Dorsolateral prefrontal cortex (tissue), 120 donors: ENCODE measurements at regions of chr11 and their contacts with region 1.

Region 1: DNA sequence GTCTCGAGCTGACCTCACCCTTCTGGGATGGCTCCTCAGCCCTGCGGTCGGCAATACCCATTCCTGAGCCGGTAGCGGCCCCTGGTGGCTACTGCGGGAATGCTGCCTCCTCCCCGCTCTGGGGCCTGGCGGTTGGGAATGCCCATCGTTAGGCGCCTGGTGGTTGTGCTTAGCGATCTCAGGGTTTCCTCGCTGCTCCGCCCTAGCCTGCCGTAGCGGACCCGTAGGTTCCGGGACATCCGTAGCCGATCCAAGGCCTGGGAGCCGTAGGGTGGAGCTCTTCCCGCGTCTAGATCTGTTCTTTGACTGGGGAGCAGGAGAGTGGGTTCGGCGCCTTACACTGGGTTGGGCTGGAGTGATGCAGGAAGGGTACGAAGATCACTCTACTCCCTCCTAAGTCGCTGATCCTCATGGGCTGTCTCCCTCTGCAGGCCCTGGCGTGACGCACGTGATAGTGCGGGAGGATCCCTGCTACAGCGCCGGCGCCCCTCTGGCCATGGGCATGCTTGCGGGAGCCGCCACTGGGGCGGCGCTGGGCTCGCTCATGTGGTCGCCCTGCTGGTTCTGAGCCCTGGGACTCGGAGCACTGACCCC is 14.8 kb downstream of the PLEKHB1 start:
- DNase-seq: peak; percentile 87 to 95 (median 92)
- H3K4me3 ChIP-seq: peak overlapping the region; percentile 11 to 68 (median 48)
- H3K27ac ChIP-seq: peak overlapping the region in 58 of 59 donors; percentile 53 to 95 (median 84)
- H3K27me3 ChIP-seq: no peaks in the 10 kb centered on the region
- CTCF ChIP-seq: peak; percentile 80 to 100 (median 98)

Region 2: GRCh38 chr11:73404048-73404447 is 257.1 kb before region 1 on chr11:
- intact Hi-C with region 1: loop called (anchors 2 to 5 kb)
- DNase-seq: peak in 8 of 10 donors; percentile 55 to 79 (median 72)
- H3K4me3 ChIP-seq: no peak overlapping the region
- H3K27ac ChIP-seq: peak overlapping the region in 29 of 59 donors; percentile 3 to 68 (median 37)
- H3K27me3 ChIP-seq: no peaks in the 10 kb centered on the region
- CTCF ChIP-seq: peak; percentile 32 to 88 (median 74)

Region 3: GRCh38 chr11:73478738-73479347 is 182.3 kb before region 1 on chr11:
- intact Hi-C with region 1: no loop called
- DNase-seq: no peak
- H3K4me3 ChIP-seq: no peak overlapping the region
- H3K27ac ChIP-seq: peak overlapping the region in 2 of 59 donors; percentile 2 to 21
- H3K27me3 ChIP-seq: no peaks in the 10 kb centered on the region
- CTCF ChIP-seq: peak in 54 of 56 donors; percentile 26 to 80 (median 62)

Region 4: GRCh38 chr11:73597956-73598718 is 63.0 kb before region 1 on chr11 and contains the start of gene FAM168A:
- intact Hi-C with region 1: loop called in 1 of 2 experiments (anchors 10 kb)
- DNase-seq: peak; percentile 92 to 98 (median 96)
- H3K4me3 ChIP-seq: peak within 1 kb of the TSS; percentile 65 to 100 (median 87)
- H3K27ac ChIP-seq: peak within 1 kb of the TSS; percentile 81 to 98 (median 94)
- H3K27me3 ChIP-seq: no peaks in the 10 kb centered on the region
- CTCF ChIP-seq: peak in 38 of 56 donors; percentile 1 to 47 (median 20)
- total RNA-seq, gene FAM168A: 120 to 211 (median 149) TPM

Region 5: DNA sequence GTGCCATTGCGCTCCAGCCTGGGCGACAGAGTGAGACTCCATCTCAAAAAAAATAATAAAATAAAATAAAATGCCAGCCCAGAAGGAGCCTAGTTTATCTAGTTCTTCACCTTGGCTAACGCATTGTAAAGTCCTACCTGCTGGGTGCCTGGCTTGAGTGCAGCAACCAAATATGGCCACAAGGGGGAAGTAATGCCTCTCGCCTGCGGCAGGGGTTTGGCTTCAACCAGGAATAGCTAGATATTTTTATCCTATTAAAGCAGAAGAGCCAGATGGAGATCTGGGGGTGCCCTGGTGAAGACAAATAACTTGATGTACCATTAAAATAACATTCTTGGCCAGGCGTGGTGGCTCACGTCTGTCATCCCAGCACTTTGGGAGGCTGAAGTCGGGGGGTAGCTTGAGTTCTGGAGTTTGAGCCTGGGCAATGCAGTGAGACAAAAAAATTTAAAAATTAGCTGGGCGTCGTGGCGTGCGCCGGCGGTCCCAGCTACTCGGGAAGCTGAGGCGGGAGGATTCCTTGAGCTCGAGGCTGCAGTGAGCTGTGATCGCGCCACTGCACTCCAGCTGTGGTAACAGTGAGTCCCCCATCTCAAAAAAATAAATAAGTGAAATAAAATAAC is 35.3 kb before region 1 on chr11:
- intact Hi-C with region 1: loop called (anchors 1 kb)
- DNase-seq: peak; percentile 63 to 88 (median 80)
- H3K4me3 ChIP-seq: peak overlapping the region in 55 of 59 donors; percentile 3 to 59 (median 45)
- H3K27ac ChIP-seq: peak overlapping the region in 12 of 59 donors; percentile 23 to 64 (median 38)
- H3K27me3 ChIP-seq: no peaks in the 10 kb centered on the region
- CTCF ChIP-seq: peak; percentile 93 to 99 (median 98)

Region 6: GRCh38 chr11:73760679-73761402 is 99.7 kb after region 1 on chr11 and contains the start of gene RAB6A:
- intact Hi-C with region 1: loop called in 1 of 2 experiments (anchors 10 kb)
- DNase-seq: peak; percentile 99 to 100 (median 100)
- H3K4me3 ChIP-seq: peak within 1 kb of the TSS; percentile 70 to 100 (median 96)
- H3K27ac ChIP-seq: peak within 1 kb of the TSS; percentile 87 to 100 (median 98)
- H3K27me3 ChIP-seq: no peaks in the 10 kb centered on the region
- CTCF ChIP-seq: peak in 44 of 56 donors; percentile 7 to 67 (median 45)
- total RNA-seq, gene RAB6A: 200 to 371 (median 290) TPM

Region 7: GRCh38 chr11:73931039-73931645 is 270.0 kb after region 1 on chr11:
- intact Hi-C with region 1: loop called in 1 of 2 experiments (anchors 1 kb)
- DNase-seq: peak in 4 of 10 donors; percentile 5 to 47 (median 32)
- H3K4me3 ChIP-seq: no peak overlapping the region
- H3K27ac ChIP-seq: peak overlapping the region in 55 of 59 donors; percentile 0 to 85 (median 63)
- H3K27me3 ChIP-seq: no peaks in the 10 kb centered on the region
- CTCF ChIP-seq: peak in 52 of 56 donors; percentile 19 to 72 (median 49)